Activated CD4-positive, alpha-beta T cell treated with anti-CD3 and anti-CD28 coated beads for 36 hours (primary cell): ENCODE measurements at regions of chr17 and their contacts with region 1.

Region 1: GRCh38 chr17:42025191-42025579 is 5.3 kb downstream of the NKIRAS2 start:
- DNase-seq: no peak
- ATAC-seq: no peak
- H3K4me3 Mint-ChIP-seq: no peak overlapping the region
- H3K27ac Mint-ChIP-seq: peak overlapping the region; percentile 66
- H3K4me1 Mint-ChIP-seq: peaks cover 23% of the 10 kb centered on the region
- H3K27me3 Mint-ChIP-seq: no peaks in the 10 kb centered on the region

Region 2: DNA sequence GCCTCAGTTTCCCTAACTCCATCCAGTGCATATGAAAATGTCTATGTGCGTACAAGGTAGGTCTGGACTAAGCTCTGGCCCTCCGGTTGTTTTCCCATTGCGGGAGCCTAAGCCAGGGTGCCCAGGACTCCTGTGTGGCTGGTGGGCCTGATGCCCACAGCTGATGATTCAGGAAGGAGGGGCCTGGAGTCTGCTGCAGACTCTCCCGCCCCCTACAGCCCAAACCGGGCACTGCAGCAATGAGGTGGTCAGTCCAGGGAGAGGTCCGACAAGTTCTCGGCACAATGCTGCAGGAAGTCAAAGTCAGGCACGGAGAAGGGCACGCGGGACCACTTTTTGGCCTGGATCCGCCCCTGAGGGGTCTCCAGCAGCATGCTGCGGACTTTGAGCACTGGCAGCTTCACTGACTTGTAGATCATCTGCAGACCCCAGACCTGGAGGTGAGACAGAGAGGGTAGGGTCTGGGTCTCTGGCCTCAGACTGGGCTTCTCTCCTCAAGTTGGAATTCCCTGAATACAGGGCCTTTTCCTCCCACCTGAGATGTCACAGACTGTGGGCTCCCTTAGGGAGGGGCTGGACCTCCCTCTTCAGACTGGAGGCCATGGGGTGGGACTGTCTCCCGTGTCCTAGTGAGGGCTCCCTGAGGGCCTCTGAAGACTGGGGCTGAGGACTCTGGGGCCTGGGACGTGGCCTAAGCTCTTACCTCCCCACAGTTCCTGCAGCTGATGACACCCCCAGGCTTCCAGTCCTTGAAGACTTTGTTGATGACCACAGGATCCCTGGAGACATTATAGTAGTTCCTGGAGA is 76.5 kb after region 1 on chr17:
- CTCF ChIA-PET with region 1: interaction called, 13 read pairs
- POLR2A ChIA-PET with region 1: no interaction called
- intact Hi-C with region 1: loop called in 1 of 2 experiments (anchors 1 kb)
- DNase-seq: peak; percentile 88
- ATAC-seq: peak; percentile 73
- H3K4me3 Mint-ChIP-seq: no peak overlapping the region
- H3K27ac Mint-ChIP-seq: no peak overlapping the region
- H3K4me1 Mint-ChIP-seq: peaks cover 8% of the 10 kb centered on the region
- H3K27me3 Mint-ChIP-seq: peaks cover 12% of the 10 kb centered on the region